MCF 10A (cell line): ENCODE measurements at regions of chr6 and their contacts with region 1.

Region 1: DNA sequence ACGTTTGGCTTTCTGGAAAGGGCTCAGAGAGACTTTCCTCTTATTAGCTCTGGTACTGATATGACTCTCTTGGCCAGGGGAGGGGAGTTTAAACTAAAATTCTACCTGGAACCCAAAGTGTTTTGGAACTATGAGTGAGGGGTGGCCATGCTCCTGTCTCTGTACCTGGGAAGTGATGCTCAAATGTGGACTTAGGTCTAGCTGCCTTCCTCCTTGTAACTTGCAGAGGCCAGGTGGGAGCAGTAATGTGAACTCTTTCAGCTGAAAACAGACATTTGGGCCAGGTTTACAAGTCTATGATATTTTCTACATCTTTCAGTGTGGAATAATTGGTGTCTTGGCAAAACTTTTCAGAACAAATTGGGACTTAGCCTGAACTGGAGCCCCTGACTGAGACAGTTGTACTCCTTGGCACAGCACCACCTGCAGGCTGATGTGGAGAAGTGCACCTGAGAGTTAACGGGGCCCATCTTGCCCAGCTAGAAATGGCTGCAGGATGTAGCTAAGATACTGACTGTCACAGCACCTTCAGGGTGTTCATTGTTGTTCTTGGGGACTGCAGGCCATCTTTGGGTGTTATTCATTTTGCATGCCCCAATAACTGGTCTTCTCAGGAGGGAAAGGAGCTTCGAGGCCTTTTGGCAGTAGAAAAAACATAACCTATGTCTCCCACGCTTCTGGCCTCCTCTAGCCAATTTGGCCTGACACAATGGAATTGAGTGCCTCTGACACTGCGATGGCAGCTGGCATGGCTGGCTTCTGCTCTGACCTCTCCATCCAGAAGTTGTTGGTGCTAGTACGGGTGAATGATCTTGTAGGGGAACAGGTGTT is 37.1 kb downstream of the CD109 start:
- DNase-seq: peak; percentile 87
- H3K4me3 Mint-ChIP-seq: no peak overlapping the region
- H3K27ac Mint-ChIP-seq: no peak overlapping the region
- H3K4me1 Mint-ChIP-seq: peaks cover 26% of the 10 kb centered on the region
- H3K27me3 Mint-ChIP-seq: no peaks in the 10 kb centered on the region
- CTCF ChIP-seq: peak; percentile 82

Region 2: GRCh38 chr6:73653571-73654424 is 79.3 kb before region 1 on chr6 and contains the start of gene SLC17A5:
- CTCF ChIA-PET with region 1: interaction called, 25 read pairs
- POLR2A ChIA-PET with region 1: interaction called, 12 read pairs
- intact Hi-C with region 1: no loop called
- DNase-seq: peak; percentile 95
- H3K4me3 Mint-ChIP-seq: peak within 1 kb of the TSS; percentile 97
- H3K27ac Mint-ChIP-seq: peak within 1 kb of the TSS; percentile 91
- H3K4me1 Mint-ChIP-seq: peaks cover 32% of the 10 kb centered on the region
- H3K27me3 Mint-ChIP-seq: no peaks in the 10 kb centered on the region
- CTCF ChIP-seq: no peak
- total RNA-seq, gene SLC17A5: 6.1 and 7.2 TPM in 2 replicates

Region 3: GRCh38 chr6:73688351-73688750 is 44.7 kb before region 1 on chr6:
- CTCF ChIA-PET with region 1: interaction called, 16 read pairs
- POLR2A ChIA-PET with region 1: no interaction called
- intact Hi-C with region 1: no loop called
- DNase-seq: no peak
- H3K4me3 Mint-ChIP-seq: no peak overlapping the region
- H3K27ac Mint-ChIP-seq: no peak overlapping the region
- H3K4me1 Mint-ChIP-seq: peaks cover 12% of the 10 kb centered on the region
- H3K27me3 Mint-ChIP-seq: no peaks in the 10 kb centered on the region
- CTCF ChIP-seq: no peak

Region 4: GRCh38 chr6:73704260-73704659 is 28.8 kb before region 1 on chr6:
- CTCF ChIA-PET with region 1: interaction called, 23 read pairs
- POLR2A ChIA-PET with region 1: interaction called, 5 read pairs
- intact Hi-C with region 1: no loop called
- DNase-seq: peak; percentile 99
- H3K4me3 Mint-ChIP-seq: no peak overlapping the region
- H3K27ac Mint-ChIP-seq: no peak overlapping the region
- H3K4me1 Mint-ChIP-seq: peaks cover 30% of the 10 kb centered on the region
- H3K27me3 Mint-ChIP-seq: no peaks in the 10 kb centered on the region
- CTCF ChIP-seq: no peak

Region 5: GRCh38 chr6:73722318-73723060 is 10.6 kb before region 1 on chr6:
- CTCF ChIA-PET with region 1: interaction called, 27 read pairs
- POLR2A ChIA-PET with region 1: interaction called, 3 read pairs
- intact Hi-C with region 1: no loop called
- DNase-seq: peak; percentile 58
- H3K4me3 Mint-ChIP-seq: no peak overlapping the region
- H3K27ac Mint-ChIP-seq: peak overlapping the region; percentile 37
- H3K4me1 Mint-ChIP-seq: peaks cover 24% of the 10 kb centered on the region
- H3K27me3 Mint-ChIP-seq: no peaks in the 10 kb centered on the region
- CTCF ChIP-seq: no peak

Region 6: DNA sequence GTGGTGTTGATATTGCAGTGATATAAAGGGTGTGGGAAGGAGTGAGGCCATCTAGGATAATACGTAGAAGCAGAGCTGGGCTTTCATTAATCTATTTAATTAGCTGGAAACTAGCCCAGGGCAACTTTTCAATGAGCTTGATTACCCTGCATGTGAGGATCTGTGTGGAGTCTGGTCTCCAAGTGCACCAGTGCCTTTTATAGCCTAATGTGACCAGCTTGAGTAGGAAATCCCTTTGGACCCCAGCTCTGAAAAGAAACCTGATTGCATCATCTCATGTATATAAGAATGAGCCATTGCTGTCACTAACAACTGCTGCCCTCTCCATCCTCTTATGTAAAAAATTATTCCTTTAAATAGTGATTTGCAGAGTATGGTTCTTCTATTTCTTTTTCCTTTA is 35.5 kb after region 1 on chr6:
- CTCF ChIA-PET with region 1: interaction called, 12 read pairs
- POLR2A ChIA-PET with region 1: no interaction called
- intact Hi-C with region 1: no loop called
- DNase-seq: no peak
- H3K4me3 Mint-ChIP-seq: no peak overlapping the region
- H3K27ac Mint-ChIP-seq: no peak overlapping the region
- H3K4me1 Mint-ChIP-seq: peaks cover 17% of the 10 kb centered on the region
- H3K27me3 Mint-ChIP-seq: no peaks in the 10 kb centered on the region
- CTCF ChIP-seq: no peak